Transverse colon (tissue), 4 donors: ENCODE measurements at regions of chr12 and their contacts with region 1.

Region 1: GRCh38 chr12:93419388-93420034 is 22.2 kb downstream of the UBE2N start:
- DNase-seq: no peak
- H3K4me3 ChIP-seq: no peak overlapping the region
- H3K27ac ChIP-seq: no peak overlapping the region
- H3K4me1 ChIP-seq: peaks cover 8 to 60% (median 12%) of the 10 kb centered on the region in 4 donors
- H3K27me3 ChIP-seq: no peaks in the 10 kb centered on the region
- CTCF ChIP-seq: peak; percentile 59 to 83 (median 74)
- EP300 ChIP-seq: no peak
- POLR2A ChIP-seq: no peak

Region 2: DNA sequence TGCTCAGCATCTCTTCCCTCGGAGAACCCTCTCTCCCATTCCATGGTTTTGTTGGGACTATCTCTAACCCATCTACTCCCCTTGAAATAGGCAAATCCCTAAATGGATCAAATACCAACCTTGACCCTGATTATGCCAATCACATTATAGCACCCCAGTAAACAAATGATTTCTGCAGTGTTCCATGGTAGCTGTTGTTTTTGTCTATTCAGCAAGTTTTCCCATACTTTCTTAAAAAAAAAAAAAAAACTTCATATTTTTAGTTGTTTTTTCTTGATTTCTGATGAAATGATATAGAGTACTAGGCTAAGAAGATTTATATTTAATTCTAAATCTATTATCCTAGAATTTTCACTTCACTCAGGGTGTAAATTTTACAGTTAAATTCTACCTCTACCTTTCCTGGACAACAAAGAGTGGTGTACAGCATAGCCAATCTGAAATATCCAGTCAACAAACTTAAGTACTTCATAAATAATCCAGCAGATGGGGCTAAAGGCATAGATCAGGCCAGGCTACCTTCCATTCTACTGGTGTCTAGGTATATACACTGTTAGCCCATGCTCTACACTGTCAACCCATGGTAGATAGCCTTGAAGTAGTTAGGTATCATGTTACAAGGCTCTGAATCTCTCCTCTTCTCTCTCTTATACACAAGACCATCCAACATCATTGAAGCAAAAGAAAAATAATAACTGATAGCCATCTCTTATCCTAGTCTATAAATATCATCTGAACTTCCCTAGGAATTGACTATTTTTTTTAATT is 634.5 kb before region 1 on chr12:
- in situ Hi-C with region 1: loop called in 2 of 4 experiments (anchors 25 kb)
- intact Hi-C with region 1: no loop called
- DNase-seq: no peak
- H3K4me3 ChIP-seq: no peak overlapping the region
- H3K27ac ChIP-seq: no peak overlapping the region
- H3K4me1 ChIP-seq: peaks cover 0 to 4% (median 0%) of the 10 kb centered on the region in 4 donors
- H3K27me3 ChIP-seq: no peaks in the 10 kb centered on the region
- CTCF ChIP-seq: peak; percentile 35 to 68 (median 49)
- EP300 ChIP-seq: no peak
- POLR2A ChIP-seq: no peak

Region 3: GRCh38 chr12:92810370-92810769 is 609.1 kb before region 1 on chr12:
- in situ Hi-C with region 1: loop called in 1 of 4 experiments (anchors 25 kb)
- intact Hi-C with region 1: no loop called
- DNase-seq: no peak
- H3K4me3 ChIP-seq: no peak overlapping the region
- H3K27ac ChIP-seq: no peak overlapping the region
- H3K4me1 ChIP-seq: no peaks in the 10 kb centered on the region
- H3K27me3 ChIP-seq: no peaks in the 10 kb centered on the region
- CTCF ChIP-seq: no peak
- EP300 ChIP-seq: no peak
- POLR2A ChIP-seq: no peak

Region 4: GRCh38 chr12:92987362-92987761 is 432.1 kb before region 1 on chr12:
- in situ Hi-C with region 1: loop called in 2 of 4 experiments (anchors 10 to 25 kb)
- intact Hi-C with region 1: loop called (anchors 5 kb)
- DNase-seq: no peak
- H3K4me3 ChIP-seq: no peak overlapping the region
- H3K27ac ChIP-seq: peak overlapping the region; percentile 43 to 68 (median 48)
- H3K4me1 ChIP-seq: peaks cover 8 to 19% (median 15%) of the 10 kb centered on the region in 4 donors
- H3K27me3 ChIP-seq: no peaks in the 10 kb centered on the region
- CTCF ChIP-seq: peak; percentile 54 to 79 (median 64)
- EP300 ChIP-seq: no peak
- POLR2A ChIP-seq: no peak

Region 5: DNA sequence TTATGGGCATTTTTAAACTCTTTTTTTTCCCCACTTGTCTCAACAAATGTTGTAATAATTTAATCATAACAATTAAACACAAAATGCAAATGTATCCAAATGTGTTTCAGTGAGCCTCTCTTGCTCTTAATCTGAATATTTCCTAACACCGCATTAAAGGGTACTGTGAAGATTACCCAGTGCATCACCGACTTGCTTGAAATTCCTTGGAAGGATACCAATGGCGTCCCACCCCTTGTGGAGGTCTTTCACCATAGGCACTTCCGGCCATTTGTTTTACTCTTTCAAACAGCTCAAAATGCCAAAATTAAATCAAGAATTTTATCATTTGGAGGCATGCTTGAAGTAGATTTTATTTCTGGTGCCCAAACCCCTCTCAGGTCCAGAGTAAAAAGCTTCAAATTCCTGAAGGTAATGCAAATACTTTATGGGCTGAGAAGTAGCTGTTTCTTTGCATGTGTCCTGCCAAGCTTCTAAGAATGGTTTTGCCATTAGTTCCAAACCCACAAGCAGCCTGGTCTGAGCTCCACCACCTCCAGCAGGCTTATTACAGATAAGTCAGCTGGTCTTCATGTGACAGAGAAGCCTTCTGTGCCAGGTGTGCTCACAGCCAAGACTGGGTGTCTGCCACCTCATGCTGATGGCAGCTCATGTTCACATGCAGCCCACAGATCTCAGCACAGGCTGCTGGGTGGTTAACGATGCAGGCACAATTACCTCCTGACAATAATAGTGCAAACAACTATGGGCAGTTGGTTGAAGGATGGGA is 58.2 kb before region 1 on chr12:
- in situ Hi-C with region 1: no loop called
- intact Hi-C with region 1: no loop called
- DNase-seq: no peak
- H3K4me3 ChIP-seq: no peak overlapping the region
- H3K27ac ChIP-seq: no peak overlapping the region
- H3K4me1 ChIP-seq: peaks cover 0 to 3% (median 0%) of the 10 kb centered on the region in 4 donors
- H3K27me3 ChIP-seq: no peaks in the 10 kb centered on the region
- CTCF ChIP-seq: no peak
- EP300 ChIP-seq: no peak
- POLR2A ChIP-seq: no peak